Body of pancreas (tissue), 4 donors: ENCODE measurements at regions of chr11 and their contacts with region 1.

Region 1: DNA sequence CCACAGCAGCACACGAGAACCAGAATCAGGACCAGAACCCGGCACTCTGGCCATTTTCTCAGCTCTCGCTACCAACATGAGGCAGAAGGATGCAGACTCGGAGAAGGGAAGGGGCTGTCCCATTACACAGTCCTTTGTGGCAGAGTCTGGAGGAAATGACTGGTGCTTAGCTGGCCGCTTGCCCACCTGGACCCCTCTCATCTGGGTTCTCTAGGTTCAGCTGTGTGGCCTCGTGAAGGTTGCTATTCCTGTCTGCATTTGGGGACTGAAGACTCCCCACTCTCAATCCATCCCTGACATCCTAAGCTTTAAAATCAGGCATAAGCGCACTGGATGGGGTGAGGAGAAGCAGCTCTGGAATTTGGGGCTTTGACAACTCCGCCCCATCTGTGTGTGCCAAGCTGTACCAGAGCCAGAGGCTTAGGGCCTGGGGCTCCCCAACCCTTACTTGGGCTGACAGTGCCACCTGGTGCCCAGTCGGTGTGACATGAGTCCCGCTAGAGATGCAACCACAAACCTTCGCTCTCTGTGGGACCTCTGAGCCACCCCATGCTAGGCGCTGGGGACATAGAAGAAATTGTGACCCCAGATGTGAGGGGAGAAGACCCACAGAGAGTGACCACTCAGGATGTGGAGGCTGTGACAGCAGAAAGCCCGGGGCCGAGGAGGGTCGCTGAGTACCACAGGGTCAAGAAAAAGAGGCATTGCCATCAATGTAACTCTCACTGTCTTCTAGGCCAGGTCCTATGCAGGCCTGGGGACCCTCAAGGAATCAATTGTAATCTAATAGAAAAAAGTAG is 35.9 kb upstream of the FCHSD2 start:
- DNase-seq: peak; percentile 84 to 86 (median 86)
- ATAC-seq: peak; percentile 74
- H3K4me3 ChIP-seq: no peak overlapping the region
- H3K27ac ChIP-seq: peak overlapping the region in 3 of 4 donors; percentile 5 to 72 (median 61)
- H3K4me1 ChIP-seq: peaks cover 53% of the 10 kb centered on the region
- H3K27me3 ChIP-seq: no peaks in the 10 kb centered on the region
- CTCF ChIP-seq: peak; percentile 63 to 93 (median 88)
- POLR2A ChIP-seq: no peak

Region 2: DNA sequence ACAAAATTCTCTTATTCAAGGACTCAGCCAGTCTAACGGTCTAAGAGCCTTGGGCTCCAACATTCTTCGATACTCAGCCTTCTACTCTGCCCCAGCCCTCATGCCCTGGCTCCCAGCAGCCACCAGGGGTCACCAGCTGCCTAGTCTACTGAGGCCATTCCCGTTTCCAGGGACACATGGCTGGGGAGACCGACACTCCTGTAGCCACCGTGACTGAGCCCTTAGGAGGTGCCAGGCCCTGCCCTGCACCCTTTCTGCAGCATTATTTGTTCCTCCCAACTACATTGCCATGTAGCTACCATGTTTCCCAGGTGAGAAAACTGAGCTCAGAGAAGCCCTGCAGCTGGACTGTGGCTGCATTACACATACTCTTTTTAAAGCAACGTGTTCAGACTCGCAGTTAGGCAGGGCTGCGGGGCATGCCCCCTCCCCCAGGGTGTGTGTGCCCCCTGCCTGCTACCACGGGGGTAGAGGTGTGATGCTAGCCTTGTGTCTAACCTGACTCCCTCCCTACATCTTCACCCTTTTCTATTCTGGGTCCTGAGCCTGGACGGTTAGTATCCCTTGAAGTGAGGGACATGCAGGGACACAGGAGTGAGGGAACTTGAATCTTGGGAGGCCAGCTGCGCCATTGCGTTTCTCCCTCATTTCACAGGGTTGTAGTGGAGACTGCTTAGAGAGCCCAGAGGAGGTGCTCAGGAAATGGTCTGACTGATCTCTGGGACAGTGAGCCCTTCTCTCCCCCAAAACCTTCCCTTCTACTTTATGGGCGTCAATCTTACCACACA is 346.3 kb before region 1 on chr11:
- intact Hi-C with region 1: loop called (anchors 5 kb)
- DNase-seq: peak; percentile 87 to 90 (median 88)
- ATAC-seq: peak; percentile 94
- H3K4me3 ChIP-seq: no peak overlapping the region
- H3K27ac ChIP-seq: peak overlapping the region in 1 of 4 donors; percentile 26
- H3K4me1 ChIP-seq: peaks cover 8% of the 10 kb centered on the region
- H3K27me3 ChIP-seq: no peaks in the 10 kb centered on the region
- CTCF ChIP-seq: peak; percentile 88 to 98 (median 96)
- POLR2A ChIP-seq: no peak

Region 3: DNA sequence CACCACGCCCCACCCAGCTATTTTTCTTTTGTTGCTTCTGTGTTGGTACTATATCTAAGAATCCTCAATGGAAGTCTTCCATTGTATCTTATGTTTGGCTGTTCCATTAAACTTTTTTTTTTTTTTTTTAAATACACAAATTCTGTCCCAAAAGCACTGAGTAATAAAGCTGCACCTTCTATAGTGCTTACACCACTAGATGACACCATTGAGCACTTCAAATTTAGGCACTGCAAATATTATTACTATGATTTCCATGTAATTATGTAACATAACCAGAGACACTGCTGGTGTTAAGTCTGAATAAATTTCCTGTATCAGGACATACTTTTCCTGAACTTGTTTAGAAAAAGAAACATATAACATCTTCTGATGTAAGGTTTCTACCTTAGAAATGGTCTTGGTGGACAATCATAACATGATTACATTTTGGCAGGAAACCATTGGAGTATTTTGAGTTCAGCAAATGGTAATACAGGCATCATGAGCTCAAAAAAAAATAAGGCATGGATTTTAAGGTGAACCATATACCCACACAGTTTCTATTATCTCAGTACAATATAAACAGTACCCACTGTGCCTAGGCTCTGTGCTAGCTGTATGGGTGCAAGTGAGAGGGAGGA is 253.3 kb before region 1 on chr11:
- intact Hi-C with region 1: loop called (anchors 10 kb)
- DNase-seq: peak in 1 of 4 donors; percentile 10
- ATAC-seq: peak; percentile 74
- H3K4me3 ChIP-seq: no peak overlapping the region
- H3K27ac ChIP-seq: no peak overlapping the region
- H3K4me1 ChIP-seq: peaks cover under 1% of the 10 kb centered on the region
- H3K27me3 ChIP-seq: no peaks in the 10 kb centered on the region
- CTCF ChIP-seq: peak; percentile 44 to 76 (median 66)
- POLR2A ChIP-seq: no peak

Region 4: DNA sequence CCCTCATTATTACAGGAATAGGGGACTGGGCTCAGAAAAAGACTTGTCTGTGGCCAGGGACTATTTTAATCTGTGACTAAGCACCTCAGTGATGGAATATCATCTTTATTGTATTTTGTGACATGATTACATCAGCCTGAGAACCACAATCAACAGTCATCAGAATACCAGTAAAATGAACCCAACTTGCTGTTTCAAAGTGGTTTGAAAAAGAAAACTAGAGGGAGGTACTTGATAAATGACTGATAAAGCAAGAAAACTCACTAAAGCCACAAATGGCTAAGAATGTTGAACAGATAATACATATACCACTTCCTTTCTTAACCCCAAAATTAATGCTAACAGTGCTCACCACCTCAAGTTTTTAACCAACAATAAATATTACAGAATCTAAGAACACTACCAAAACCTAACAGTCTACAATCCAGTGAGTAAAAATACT is 208.1 kb before region 1 on chr11:
- intact Hi-C with region 1: no loop called
- DNase-seq: no peak
- ATAC-seq: no peak
- H3K4me3 ChIP-seq: no peak overlapping the region
- H3K27ac ChIP-seq: no peak overlapping the region
- H3K4me1 ChIP-seq: peaks cover 5% of the 10 kb centered on the region
- H3K27me3 ChIP-seq: no peaks in the 10 kb centered on the region
- CTCF ChIP-seq: no peak
- POLR2A ChIP-seq: no peak

Region 5: DNA sequence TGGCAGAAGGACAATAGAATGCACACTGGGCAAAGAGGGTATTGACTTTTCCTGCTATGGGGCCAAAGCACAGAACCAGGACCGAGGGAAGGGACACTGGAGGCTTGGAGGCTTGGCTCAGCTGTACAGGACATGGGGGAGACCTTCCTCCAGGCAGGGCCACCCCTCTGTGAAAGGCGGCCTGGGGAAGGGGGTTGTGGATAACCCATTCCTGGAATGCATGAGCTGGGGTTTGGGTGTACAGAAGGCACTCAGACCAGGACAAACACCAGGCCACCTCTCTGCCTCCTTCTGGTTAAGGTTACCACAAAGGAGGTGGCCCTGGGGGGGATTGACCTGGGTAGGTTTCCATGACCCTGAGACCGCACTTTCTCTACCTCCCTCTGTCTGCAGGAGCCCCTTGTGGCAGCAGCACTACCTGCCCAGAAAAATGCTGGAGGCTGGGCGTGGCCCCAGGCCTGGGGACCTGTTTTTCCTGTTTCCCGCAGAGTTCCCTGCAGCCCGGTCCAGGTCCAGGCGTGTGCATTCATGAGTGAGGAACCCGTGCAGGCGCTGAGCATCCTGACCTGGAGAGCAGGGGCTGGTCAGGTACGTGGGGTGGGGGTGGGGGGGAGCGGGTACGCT is 49.7 kb after region 1 on chr11:
- intact Hi-C with region 1: no loop called
- DNase-seq: peak; percentile 75 to 84 (median 80)
- ATAC-seq: peak; percentile 94
- H3K4me3 ChIP-seq: no peak overlapping the region
- H3K27ac ChIP-seq: peak overlapping the region in 2 of 4 donors; percentile 25 to 30
- H3K4me1 ChIP-seq: peaks cover 13% of the 10 kb centered on the region
- H3K27me3 ChIP-seq: no peaks in the 10 kb centered on the region
- CTCF ChIP-seq: peak; percentile 16 to 65 (median 53)
- POLR2A ChIP-seq: no peak

Region 6: GRCh38 chr11:73445980-73446379 is 268.0 kb after region 1 on chr11:
- intact Hi-C with region 1: no loop called
- DNase-seq: no peak
- ATAC-seq: no peak
- H3K4me3 ChIP-seq: no peak overlapping the region
- H3K27ac ChIP-seq: no peak overlapping the region
- H3K4me1 ChIP-seq: no peaks in the 10 kb centered on the region
- H3K27me3 ChIP-seq: no peaks in the 10 kb centered on the region
- CTCF ChIP-seq: no peak
- POLR2A ChIP-seq: no peak